Breast epithelium (tissue), 4 donors: ENCODE measurements at regions of chr12 and their contacts with region 1.

Region 1: GRCh38 chr12:84512751-84513150 is 399.8 kb downstream of the SLC6A15 start:
- DNase-seq: no peak
- H3K4me3 ChIP-seq: no peak overlapping the region
- H3K27ac ChIP-seq: no peak overlapping the region
- H3K4me1 ChIP-seq: no peaks in the 10 kb centered on the region
- H3K27me3 ChIP-seq: no peaks in the 10 kb centered on the region
- CTCF ChIP-seq: no peak
- POLR2A ChIP-seq: no peak

Region 2: DNA sequence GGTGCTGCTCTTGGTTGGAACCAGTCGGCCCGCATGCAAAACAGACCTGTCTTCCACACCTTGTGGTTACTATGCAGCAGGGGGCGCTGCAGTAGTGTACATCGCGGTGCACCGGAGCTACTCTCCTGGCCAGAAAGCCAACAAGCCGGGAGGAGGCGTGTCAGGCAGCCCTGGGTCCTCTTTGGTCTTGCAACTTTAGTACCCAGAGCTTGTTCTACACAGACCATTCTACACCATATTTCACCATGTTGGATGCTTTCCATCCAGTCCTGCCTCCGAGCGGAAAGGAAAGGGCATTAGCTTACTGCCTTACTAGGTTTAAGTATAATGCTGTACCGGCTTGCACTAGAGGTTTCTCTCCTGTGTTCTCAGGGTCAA is 1827.0 kb before region 1 on chr12:
- intact Hi-C with region 1: no loop called
- DNase-seq: peak; percentile 94 to 97
- H3K4me3 ChIP-seq: peak overlapping the region; percentile 77 to 82 (median 79)
- H3K27ac ChIP-seq: peak overlapping the region; percentile 93 to 96
- H3K4me1 ChIP-seq: peaks cover 0 to 17% of the 10 kb centered on the region in 2 donors
- H3K27me3 ChIP-seq: no peaks in the 10 kb centered on the region
- CTCF ChIP-seq: peak; percentile 82 to 88 (median 86)
- POLR2A ChIP-seq: no peak

Region 3: DNA sequence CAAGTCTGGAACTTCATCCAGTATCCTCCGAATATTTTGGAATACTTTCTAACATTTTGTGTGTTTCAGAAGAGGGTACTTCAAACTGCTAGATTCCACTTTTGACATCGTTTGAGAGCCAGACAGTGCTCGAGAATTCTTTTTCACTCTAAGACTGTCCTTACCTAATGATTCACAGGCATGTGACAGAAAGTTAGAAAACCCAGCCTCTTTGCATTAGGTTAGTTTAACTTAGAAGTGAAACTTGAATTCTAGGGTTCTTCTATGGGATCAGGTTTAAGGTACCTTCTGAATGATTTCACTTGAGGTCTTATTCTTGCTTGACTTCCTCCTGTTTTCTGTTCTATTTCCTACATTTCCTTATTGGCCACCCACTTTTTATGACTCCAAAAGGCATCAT is 31.9 kb before region 1 on chr12:
- intact Hi-C with region 1: loop called (anchors 2 kb)
- DNase-seq: no peak
- H3K4me3 ChIP-seq: no peak overlapping the region
- H3K27ac ChIP-seq: no peak overlapping the region
- H3K4me1 ChIP-seq: no peaks in the 10 kb centered on the region
- H3K27me3 ChIP-seq: no peaks in the 10 kb centered on the region
- CTCF ChIP-seq: no peak
- POLR2A ChIP-seq: no peak